OCI-LY7 (cell line): ENCODE measurements at regions of chr10 and their contacts with region 1.

Region 1: DNA sequence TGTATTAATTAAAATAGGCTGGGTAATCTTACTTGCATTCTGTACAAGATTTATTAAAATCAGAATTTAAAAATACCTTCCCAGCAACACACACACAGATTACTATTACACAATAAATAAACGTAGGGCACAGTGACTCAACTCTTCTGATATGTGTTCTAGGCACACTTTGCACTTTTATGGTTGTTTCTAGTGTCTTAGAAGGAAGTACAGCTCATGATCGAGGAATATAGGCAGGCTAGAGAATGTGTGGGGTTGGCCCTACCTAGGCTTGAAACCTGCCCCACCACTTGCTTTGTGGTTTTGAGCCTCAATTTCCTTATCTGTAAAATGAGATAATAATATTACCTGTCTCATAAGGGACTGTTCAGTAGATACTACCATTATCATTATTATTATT is 30.5 kb downstream of the ARMC3 start:
- DNase-seq: no peak
- H3K4me3 ChIP-seq: no peak overlapping the region
- H3K27ac ChIP-seq: no peak overlapping the region
- H3K4me1 ChIP-seq: no peaks in the 10 kb centered on the region
- CTCF ChIP-seq: no peak

Region 2: GRCh38 chr10:22308390-22308789 is 649.9 kb before region 1 on chr10:
- CTCF ChIA-PET with region 1: no interaction called
- POLR2A ChIA-PET with region 1: no interaction called
- intact Hi-C with region 1: no loop called
- DNase-seq: no peak
- H3K4me3 ChIP-seq: no peak overlapping the region
- H3K27ac ChIP-seq: no peak overlapping the region
- H3K4me1 ChIP-seq: no peaks in the 10 kb centered on the region
- CTCF ChIP-seq: no peak

Region 3: GRCh38 chr10:22500656-22501340 is 457.5 kb before region 1 on chr10:
- CTCF ChIA-PET with region 1: no interaction called
- POLR2A ChIA-PET with region 1: interaction called, 10 read pairs
- intact Hi-C with region 1: no loop called
- DNase-seq: no peak
- H3K4me3 ChIP-seq: no peak overlapping the region
- H3K27ac ChIP-seq: no peak overlapping the region
- H3K4me1 ChIP-seq: no peaks in the 10 kb centered on the region
- CTCF ChIP-seq: no peak

Region 4: GRCh38 chr10:23293145-23293724 is 334.9 kb after region 1 on chr10:
- CTCF ChIA-PET with region 1: no interaction called
- POLR2A ChIA-PET with region 1: no interaction called
- intact Hi-C with region 1: no loop called
- DNase-seq: peak; percentile 50
- H3K4me3 ChIP-seq: no peak overlapping the region
- H3K27ac ChIP-seq: no peak overlapping the region
- H3K4me1 ChIP-seq: no peaks in the 10 kb centered on the region
- CTCF ChIP-seq: peak; percentile 75